CD4-positive, alpha-beta memory T cell (primary cell): ENCODE measurements at regions of chr9 and their contacts with region 1.

Region 1: GRCh38 chr9:19122490-19123042 is 4.7 kb downstream of the PLIN2 start:
- DNase-seq: no peak
- H3K4me3 ChIP-seq: no peak overlapping the region
- H3K4me3 Mint-ChIP-seq: no peak overlapping the region
- H3K27ac ChIP-seq: no peak overlapping the region
- H3K27ac Mint-ChIP-seq: peak overlapping the region in 5 of 7 donors; percentile 31 to 95 (median 84)
- H3K4me1 ChIP-seq: peaks cover 44% of the 10 kb centered on the region
- H3K4me1 Mint-ChIP-seq: peaks cover 25 to 64% (median 47%) of the 10 kb centered on the region in 4 donors
- H3K27me3 ChIP-seq: no peaks in the 10 kb centered on the region
- H3K27me3 Mint-ChIP-seq: no peaks in the 10 kb centered on the region

Region 2: DNA sequence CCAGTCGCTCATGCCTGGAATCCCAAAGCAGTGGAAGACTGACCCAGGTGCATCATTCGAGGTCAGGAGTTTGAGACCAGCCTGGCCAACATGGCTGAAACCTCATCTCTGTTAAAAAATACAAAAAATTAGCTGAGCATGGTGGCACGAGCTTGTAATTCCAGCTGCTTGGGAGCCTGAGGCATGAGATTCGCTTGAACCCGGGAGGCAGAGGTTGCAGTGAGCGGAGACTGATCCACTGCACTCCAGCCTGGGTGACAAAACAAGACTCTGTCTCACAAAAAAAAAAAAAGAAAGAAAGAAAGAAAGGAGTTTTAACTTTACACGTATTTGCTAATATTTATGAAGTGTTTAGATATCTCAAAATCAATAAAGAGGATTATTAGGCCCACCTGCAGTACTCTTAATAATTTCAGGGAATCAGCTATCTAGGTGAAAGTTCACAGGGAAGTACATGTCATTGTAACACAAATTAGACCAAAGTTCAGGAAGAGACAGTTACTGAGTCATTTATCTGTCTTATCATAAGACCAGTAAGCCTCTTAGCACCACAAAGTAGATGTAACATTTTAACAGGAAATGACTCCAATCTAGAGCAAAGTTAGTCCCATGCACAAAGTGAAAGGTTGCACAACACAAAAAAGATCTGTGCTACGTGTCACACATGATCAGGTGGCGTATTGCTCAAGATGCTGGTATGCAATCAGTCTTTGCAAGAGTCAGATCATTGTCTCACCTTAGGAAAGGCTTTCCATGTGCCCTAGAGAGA is 38.9 kb after region 1 on chr9:
- CTCF ChIA-PET with region 1: no interaction called
- POLR2A ChIA-PET with region 1: interaction called, 10 read pairs
- intact Hi-C with region 1: loop called (anchors 1 kb)
- DNase-seq: peak; percentile 50 to 75 (median 60)
- H3K4me3 ChIP-seq: no peak overlapping the region
- H3K4me3 Mint-ChIP-seq: peak overlapping the region in 7 of 8 donors; percentile 56 to 75 (median 67)
- H3K27ac ChIP-seq: peak overlapping the region; percentile 52
- H3K27ac Mint-ChIP-seq: peak overlapping the region; percentile 73 to 96 (median 89)
- H3K4me1 ChIP-seq: peaks cover 18% of the 10 kb centered on the region
- H3K4me1 Mint-ChIP-seq: peaks cover 11 to 19% (median 14%) of the 10 kb centered on the region in 4 donors
- H3K27me3 ChIP-seq: no peaks in the 10 kb centered on the region
- H3K27me3 Mint-ChIP-seq: no peaks in the 10 kb centered on the region